HepG2 (cell line): ENCODE measurements at regions of chr3 and their contacts with region 1.

Region 1: GRCh38 chr3:158479051-158479450 is 91.9 kb upstream of the MLF1 start:
- DNase-seq: no peak
- ATAC-seq: no peak
- H3K4me3 ChIP-seq: no peak overlapping the region
- H3K27ac ChIP-seq: no peak overlapping the region
- H3K4me1 ChIP-seq: no peaks in the 10 kb centered on the region
- H3K27me3 ChIP-seq: no peaks in the 10 kb centered on the region
- CTCF ChIP-seq: no peak
- EP300 ChIP-seq: no peak
- POLR2A ChIP-seq: no peak
- RAD21 ChIP-seq: no peak

Region 2: GRCh38 chr3:158456114-158456513 is 22.9 kb before region 1 on chr3:
- CTCF ChIA-PET with region 1: no interaction called
- POLR2A ChIA-PET with region 1: no interaction called
- in situ Hi-C with region 1: no loop called
- intact Hi-C with region 1: loop called (anchors 2 kb)
- DNase-seq: no peak
- ATAC-seq: no peak
- H3K4me3 ChIP-seq: no peak overlapping the region
- H3K27ac ChIP-seq: no peak overlapping the region
- H3K4me1 ChIP-seq: peaks cover 15% of the 10 kb centered on the region
- H3K27me3 ChIP-seq: no peaks in the 10 kb centered on the region
- CTCF ChIP-seq: no peak
- EP300 ChIP-seq: no peak
- POLR2A ChIP-seq: no peak
- RAD21 ChIP-seq: no peak